ENCODE measurements at regions of chr1 and their contacts with region 1.

Region 1: DNA sequence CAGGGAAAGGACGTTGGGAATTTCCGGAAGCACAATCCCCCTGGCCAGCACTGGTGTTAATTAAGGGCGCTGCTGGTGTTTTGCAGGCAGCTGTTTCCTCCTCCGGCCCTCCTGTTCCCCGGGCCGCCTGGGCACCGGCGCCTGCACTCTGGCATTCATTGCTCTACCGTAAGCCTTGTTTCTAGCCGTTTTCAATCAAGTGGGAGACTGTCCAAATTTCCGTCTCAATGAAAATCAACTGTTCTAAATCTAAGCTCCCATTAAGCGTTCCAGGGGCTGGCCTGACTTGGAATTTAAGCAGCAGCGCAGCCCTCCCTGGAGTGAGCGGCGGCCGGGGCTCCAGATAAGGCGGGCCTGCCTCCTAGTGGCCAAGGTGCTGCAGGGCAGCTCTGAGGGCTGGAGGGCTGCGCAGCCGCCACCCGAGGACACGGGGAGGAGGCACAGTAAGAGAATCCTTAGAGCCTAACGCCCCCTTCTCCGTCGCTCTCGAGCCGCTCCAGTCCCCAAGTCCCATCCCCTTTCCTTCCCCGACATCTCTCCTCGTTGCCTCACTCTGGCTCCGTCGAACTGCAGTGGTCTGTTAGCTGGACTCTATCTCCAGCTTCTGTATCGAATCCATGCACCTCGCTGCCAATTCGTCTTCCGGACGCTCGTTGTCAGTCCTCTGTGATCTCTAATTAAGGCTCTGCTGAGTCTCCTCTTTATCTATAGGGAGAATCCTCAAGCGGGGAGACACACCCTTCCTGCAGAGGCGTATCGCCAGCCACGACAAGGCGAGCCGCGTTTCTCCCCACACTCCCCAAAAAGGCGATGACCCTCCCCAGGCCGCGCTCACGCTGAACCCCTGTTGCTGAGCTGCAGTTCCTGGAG is 57.8 kb upstream of the LRRC8D start:
- H3K4me3 ChIP-seq: peak overlapping the region; percentile 35
- H3K27ac ChIP-seq: no peak overlapping the region; the same call in 1 of the 2 replicates
- H3K4me1 ChIP-seq: no peaks in the 10 kb centered on the region
- CTCF ChIP-seq: peak; percentile 97

Region 2: GRCh38 chr1:89483010-89483756 is 279.8 kb before region 1 on chr1:
- CTCF ChIA-PET with region 1: interaction called, 72 read pairs
- POLR2A ChIA-PET with region 1: no interaction called
- H3K4me3 ChIP-seq: no peak overlapping the region
- H3K27ac ChIP-seq: no peak overlapping the region
- H3K4me1 ChIP-seq: no peaks in the 10 kb centered on the region
- CTCF ChIP-seq: no peak; the same call in none of the 2 replicates

Region 3: DNA sequence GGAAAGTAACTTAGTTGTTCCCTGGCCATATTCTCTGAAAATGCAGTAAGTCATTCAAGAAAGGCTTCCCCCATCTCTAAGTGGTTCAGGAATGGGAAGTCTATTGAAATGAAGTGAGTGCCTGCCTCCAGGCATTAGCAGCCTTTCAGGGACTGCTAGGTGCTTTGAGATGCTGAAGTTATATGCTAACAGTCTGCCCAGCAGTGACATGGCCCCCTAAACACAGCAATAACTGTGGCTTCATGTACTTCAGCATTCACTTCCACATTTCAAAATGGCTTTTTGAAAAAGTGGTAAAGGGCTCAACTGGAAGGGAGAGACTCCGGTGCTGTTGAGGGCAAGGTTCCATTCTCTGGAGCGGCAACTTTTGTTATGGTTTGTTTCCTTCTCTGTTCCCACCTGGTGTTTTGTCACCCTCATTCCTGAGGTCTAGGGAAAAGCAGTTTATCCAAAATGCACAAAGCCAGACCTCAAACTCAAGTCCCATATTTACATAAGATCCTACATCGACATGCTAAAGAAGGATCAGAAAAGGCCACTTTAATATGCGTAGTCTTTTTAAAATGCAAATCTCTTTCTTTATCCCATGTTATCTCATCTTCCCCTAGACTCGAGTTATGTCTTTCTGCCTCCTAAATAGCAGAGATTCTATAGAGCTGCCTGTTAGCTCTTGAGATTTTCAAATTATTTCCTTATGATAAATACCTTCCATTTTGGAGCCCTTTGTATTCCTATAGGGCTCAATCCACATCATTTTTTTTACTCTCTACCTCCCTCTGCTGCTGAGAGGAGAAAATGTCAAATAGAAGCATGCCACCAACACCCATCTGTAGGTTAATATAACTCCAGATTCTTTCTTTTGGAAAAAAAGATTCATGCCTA is 164.3 kb before region 1 on chr1:
- CTCF ChIA-PET with region 1: interaction called, 17 read pairs
- POLR2A ChIA-PET with region 1: no interaction called
- H3K4me3 ChIP-seq: no peak overlapping the region
- H3K27ac ChIP-seq: no peak overlapping the region
- H3K4me1 ChIP-seq: no peaks in the 10 kb centered on the region
- CTCF ChIP-seq: no peak

Region 4: DNA sequence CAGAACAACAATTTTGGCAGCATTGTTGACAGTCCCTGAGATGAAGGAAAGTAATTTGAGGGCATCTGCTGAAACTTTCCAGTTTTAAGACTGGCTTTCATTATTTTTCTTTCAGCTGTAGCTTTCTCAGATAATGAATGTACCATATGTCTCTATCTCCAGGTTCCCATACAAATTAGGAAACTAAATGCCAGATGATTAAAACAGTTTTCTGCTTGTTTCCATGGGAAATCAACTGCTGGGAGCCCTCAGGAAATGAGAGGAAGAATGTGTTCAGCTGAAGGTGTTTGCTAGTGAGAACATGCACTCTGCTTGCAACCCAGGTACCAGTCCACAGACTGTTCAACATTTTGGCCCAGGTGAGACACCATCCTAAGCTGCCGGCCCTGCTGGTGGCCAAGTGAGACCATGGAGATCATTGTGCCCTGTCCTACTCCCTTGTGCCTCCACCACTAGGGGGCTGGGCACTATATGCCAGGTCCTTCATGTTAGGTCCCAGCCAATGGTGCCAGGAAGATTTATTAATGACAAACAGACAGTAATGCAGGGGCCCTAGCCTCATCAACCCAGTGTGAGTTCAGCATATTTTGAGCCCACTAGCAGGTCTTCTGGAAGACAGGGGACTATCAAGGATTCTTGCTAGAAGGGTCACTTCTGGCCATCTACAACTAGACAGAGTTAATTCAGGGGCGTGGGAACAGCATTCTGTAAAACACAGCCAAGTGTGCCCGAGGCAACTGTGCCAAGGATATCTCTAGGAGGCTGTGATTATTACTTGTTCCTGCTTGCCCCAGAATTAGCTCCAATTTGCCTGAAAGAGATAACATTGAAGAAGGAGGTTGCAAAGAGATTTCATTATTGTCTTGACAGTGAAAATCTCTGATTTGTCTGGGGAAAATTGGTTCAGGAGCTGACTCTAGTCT is 147.1 kb before region 1 on chr1:
- CTCF ChIA-PET with region 1: interaction called, 10 read pairs
- POLR2A ChIA-PET with region 1: no interaction called
- H3K4me3 ChIP-seq: no peak overlapping the region
- H3K27ac ChIP-seq: no peak overlapping the region
- H3K4me1 ChIP-seq: no peaks in the 10 kb centered on the region
- CTCF ChIP-seq: no peak

Region 5: DNA sequence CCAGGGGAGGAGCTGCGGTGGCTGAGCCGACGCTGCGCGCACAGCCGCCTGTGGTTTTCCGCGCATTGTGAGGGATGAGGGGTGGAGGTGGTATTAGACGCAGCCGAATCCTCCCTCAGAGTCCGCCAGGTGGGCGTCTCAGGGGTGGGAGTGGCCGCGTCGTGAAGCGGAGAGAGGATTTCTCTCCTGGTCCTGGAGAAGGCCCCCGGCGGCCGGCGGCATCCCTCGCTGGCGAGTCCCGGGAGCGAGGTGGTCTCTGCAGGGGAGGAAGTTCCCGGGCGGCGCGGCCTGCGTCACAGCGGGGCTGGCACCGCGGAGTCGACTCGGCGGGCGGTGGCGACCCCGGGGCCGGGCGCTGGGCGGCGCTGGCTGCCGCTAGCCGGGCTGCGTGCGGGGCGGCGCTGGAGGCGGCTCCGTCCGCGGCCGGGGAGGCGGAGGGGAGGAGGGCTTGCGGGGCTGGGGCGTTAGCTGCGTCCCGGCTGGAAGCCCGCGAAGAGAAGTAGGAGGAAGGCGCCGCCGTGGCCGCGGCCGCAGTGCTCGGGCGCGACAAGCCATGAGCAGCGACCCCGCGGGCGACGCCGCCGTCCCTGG is 130.3 kb before region 1 on chr1 and contains the start of gene LRRC8C:
- CTCF ChIA-PET with region 1: interaction called, 33 read pairs
- POLR2A ChIA-PET with region 1: interaction called, 4 read pairs
- H3K4me3 ChIP-seq: peak within 1 kb of the TSS; percentile 91
- H3K27ac ChIP-seq: peak within 1 kb of the TSS; percentile 78
- H3K4me1 ChIP-seq: peaks cover 6% of the 10 kb centered on the region
- CTCF ChIP-seq: peak; percentile 69

Region 6: GRCh38 chr1:89780721-89781120 is 17.7 kb after region 1 on chr1:
- CTCF ChIA-PET with region 1: interaction called, 17 read pairs
- POLR2A ChIA-PET with region 1: no interaction called
- H3K4me3 ChIP-seq: no peak overlapping the region
- H3K27ac ChIP-seq: no peak overlapping the region
- H3K4me1 ChIP-seq: no peaks in the 10 kb centered on the region
- CTCF ChIP-seq: peak; percentile 59

Region 7: GRCh38 chr1:89794406-89794805 is 31.4 kb after region 1 on chr1:
- CTCF ChIA-PET with region 1: no interaction called
- POLR2A ChIA-PET with region 1: no interaction called
- H3K4me3 ChIP-seq: no peak overlapping the region
- H3K27ac ChIP-seq: no peak overlapping the region
- H3K4me1 ChIP-seq: no peaks in the 10 kb centered on the region
- CTCF ChIP-seq: no peak